MCF 10A (cell line): ENCODE measurements at regions of chr2 and their contacts with region 1.

Region 1: GRCh38 chr2:187581125-187581896 is 27.1 kb upstream of the TFPI start:
- DNase-seq: peak; percentile 77
- H3K4me3 Mint-ChIP-seq: peak overlapping the region; percentile 58
- H3K27ac Mint-ChIP-seq: peak overlapping the region; percentile 81
- H3K4me1 Mint-ChIP-seq: peaks cover 9% of the 10 kb centered on the region
- H3K27me3 Mint-ChIP-seq: no peaks in the 10 kb centered on the region
- CTCF ChIP-seq: peak; percentile 76

Region 2: GRCh38 chr2:186532891-186533290 is 1048.4 kb before region 1 on chr2:
- CTCF ChIA-PET with region 1: no interaction called
- POLR2A ChIA-PET with region 1: no interaction called
- intact Hi-C with region 1: no loop called
- DNase-seq: no peak
- H3K4me3 Mint-ChIP-seq: no peak overlapping the region
- H3K27ac Mint-ChIP-seq: no peak overlapping the region
- H3K4me1 Mint-ChIP-seq: no peaks in the 10 kb centered on the region
- H3K27me3 Mint-ChIP-seq: no peaks in the 10 kb centered on the region
- CTCF ChIP-seq: no peak

Region 3: DNA sequence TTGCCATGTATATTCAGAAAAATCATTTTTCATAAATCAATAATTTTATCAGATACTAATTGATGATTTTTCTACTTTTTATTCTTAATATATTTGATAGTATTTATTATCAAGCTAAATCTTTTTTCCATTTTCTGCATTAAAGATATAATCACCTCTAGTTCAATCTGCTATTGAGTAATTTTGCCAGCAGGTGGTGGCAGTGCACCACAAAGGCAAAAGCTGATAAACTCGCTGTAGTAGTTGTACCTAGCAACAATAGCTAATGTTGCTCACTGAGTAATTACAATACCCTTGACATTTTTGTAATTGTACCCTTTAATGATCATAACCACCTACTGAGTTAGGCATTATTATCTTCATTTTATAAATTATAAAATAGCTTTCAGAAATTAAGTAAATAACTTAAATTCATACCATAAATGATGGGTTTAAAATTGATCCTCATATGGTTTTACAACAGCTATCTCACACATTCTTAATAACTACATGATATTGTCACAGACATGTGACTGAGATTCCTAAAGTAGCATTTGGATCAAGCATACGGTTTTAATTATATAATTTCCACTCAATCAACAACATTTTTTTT is 81.3 kb before region 1 on chr2:
- CTCF ChIA-PET with region 1: interaction called, 363 read pairs
- POLR2A ChIA-PET with region 1: interaction called, 44 read pairs
- intact Hi-C with region 1: loop called (anchors 1 kb)
- DNase-seq: peak; percentile 76
- H3K4me3 Mint-ChIP-seq: no peak overlapping the region
- H3K27ac Mint-ChIP-seq: no peak overlapping the region
- H3K4me1 Mint-ChIP-seq: peaks cover 12% of the 10 kb centered on the region
- H3K27me3 Mint-ChIP-seq: no peaks in the 10 kb centered on the region
- CTCF ChIP-seq: peak; percentile 79

Region 4: GRCh38 chr2:187529977-187530721 is 51.2 kb before region 1 on chr2:
- CTCF ChIA-PET with region 1: interaction called, 19 read pairs
- POLR2A ChIA-PET with region 1: interaction called, 3 read pairs
- intact Hi-C with region 1: no loop called
- DNase-seq: peak; percentile 91
- H3K4me3 Mint-ChIP-seq: peak overlapping the region; percentile 59
- H3K27ac Mint-ChIP-seq: peak overlapping the region; percentile 82
- H3K4me1 Mint-ChIP-seq: peaks cover 34% of the 10 kb centered on the region
- H3K27me3 Mint-ChIP-seq: no peaks in the 10 kb centered on the region
- CTCF ChIP-seq: no peak

Region 5: GRCh38 chr2:187567126-187567525 is 14.2 kb before region 1 on chr2:
- CTCF ChIA-PET with region 1: interaction called, 18 read pairs
- POLR2A ChIA-PET with region 1: no interaction called
- intact Hi-C with region 1: no loop called
- DNase-seq: no peak
- H3K4me3 Mint-ChIP-seq: no peak overlapping the region
- H3K27ac Mint-ChIP-seq: no peak overlapping the region
- H3K4me1 Mint-ChIP-seq: no peaks in the 10 kb centered on the region
- H3K27me3 Mint-ChIP-seq: no peaks in the 10 kb centered on the region
- CTCF ChIP-seq: no peak

Region 6: GRCh38 chr2:188291617-188292347 is 710.5 kb after region 1 on chr2 and contains the start of gene GULP1:
- CTCF ChIA-PET with region 1: interaction called, 21 read pairs
- POLR2A ChIA-PET with region 1: interaction called, 3 read pairs
- intact Hi-C with region 1: loop called (anchors 5 kb)
- DNase-seq: peak; percentile 76
- H3K4me3 Mint-ChIP-seq: peak within 1 kb of the TSS; percentile 99
- H3K27ac Mint-ChIP-seq: peak within 1 kb of the TSS; percentile 87
- H3K4me1 Mint-ChIP-seq: peaks cover 22% of the 10 kb centered on the region
- H3K27me3 Mint-ChIP-seq: no peaks in the 10 kb centered on the region
- CTCF ChIP-seq: peak; percentile 73
- total RNA-seq, gene GULP1: 4.2 and 9.3 TPM in 2 replicates

Region 7: DNA sequence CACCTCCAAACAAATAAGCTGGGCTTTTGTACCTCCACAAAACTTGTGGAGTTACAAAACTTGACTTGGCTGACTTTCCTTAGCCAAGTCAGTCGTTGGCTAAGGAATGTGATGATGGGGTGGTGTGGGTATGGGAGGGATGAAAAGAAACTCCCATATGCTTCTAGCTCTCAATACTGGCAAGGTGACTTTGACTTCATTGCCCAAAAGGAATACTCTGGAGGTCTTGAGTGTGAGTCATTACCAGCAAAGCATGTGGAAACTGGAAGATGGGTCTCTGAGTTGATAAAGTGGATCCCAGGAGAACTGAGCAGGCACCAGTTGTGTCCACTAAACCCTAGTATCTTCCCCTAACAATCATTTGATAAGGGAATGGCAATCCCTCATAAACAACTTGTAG is 937.1 kb after region 1 on chr2:
- CTCF ChIA-PET with region 1: interaction called, 12 read pairs
- POLR2A ChIA-PET with region 1: no interaction called
- intact Hi-C with region 1: no loop called
- DNase-seq: no peak
- H3K4me3 Mint-ChIP-seq: no peak overlapping the region
- H3K27ac Mint-ChIP-seq: no peak overlapping the region
- H3K4me1 Mint-ChIP-seq: peaks cover 9% of the 10 kb centered on the region
- H3K27me3 Mint-ChIP-seq: no peaks in the 10 kb centered on the region
- CTCF ChIP-seq: no peak